Right ventricle myocardium superior (tissue), 1 donor: ENCODE measurements at regions of chr16 and their contacts with region 1.

Region 1: GRCh38 chr16:55711959-55712876 is 56.4 kb downstream of the SLC6A2 start:
- DNase-seq: peak; percentile 78
- ATAC-seq: peak; percentile 91

Region 2: DNA sequence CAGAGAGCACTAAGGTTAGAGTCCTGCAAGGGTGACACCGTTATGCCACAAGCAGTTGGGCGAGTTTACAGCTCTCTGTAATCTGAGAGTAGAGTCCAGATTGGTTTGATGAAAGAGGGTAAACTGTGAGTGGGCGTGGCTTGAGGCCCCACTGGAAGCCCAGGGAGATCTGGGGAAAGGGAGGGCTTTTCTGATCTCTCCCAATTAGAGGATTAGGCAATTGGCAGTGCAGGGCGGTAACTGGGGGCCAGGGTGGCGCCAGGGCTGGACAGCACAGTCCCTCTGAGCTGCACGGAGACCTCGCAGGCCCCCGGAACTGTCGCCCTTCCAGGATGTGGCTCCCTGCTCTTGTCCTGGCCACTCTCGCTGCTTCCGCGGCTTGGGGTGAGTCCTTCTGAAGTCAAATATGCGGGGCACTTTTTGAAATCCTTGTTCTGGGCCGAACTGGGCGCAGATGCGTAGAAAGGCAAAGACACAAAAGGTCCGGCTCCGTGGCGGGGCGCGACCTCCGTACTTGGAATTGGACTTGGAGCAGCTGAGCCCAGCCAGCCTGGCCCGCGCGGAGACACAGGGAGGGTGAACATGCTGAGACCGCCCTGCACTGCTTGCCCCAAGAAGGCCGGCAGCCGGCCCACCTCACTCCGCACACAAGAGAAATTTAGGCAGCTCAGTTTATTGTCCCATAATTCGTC is 48.2 kb after region 1 on chr16:
- intact Hi-C with region 1: no loop called
- DNase-seq: peak; percentile 80
- ATAC-seq: peak; percentile 83

Region 3: DNA sequence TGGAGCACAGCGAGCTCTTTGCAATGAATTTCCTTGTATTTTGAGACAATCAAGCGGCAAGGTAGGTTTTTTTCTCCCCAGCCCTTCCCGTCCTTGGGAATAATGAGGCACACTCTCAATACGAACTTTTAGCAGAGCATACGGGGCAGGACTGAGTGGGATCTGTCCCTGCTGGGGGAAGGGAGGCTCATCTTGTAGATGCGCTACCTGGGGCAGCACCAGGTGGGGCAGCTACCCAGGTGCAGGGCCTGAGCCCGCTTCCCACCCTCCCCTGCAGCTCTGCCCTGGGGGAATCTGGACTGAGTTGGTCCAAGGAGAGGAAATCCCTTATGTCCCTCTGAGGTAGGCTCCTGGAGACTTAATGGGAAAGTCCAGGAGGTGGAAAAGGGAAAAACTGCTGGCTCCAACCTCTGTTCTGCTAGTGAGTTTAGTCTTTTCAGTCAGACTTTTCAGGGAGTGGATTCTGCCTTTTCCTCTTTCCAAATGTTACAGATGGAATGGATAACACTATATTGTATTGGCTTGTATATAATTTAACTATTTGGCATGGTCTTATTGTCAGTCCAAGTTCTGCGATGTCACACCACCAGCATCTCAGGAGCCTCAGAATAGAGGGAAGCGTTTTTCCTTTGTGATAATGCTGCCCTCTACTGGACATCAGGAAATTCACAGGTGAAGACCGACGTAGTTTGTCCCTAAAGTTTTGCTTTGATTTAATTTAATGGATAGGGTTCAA is 130.3 kb after region 1 on chr16:
- intact Hi-C with region 1: loop called (anchors 2 kb)
- DNase-seq: no peak
- ATAC-seq: peak; percentile 70